CD14-positive monocyte (primary cell): ENCODE measurements at regions of chr16 and their contacts with region 1.

Region 1: DNA sequence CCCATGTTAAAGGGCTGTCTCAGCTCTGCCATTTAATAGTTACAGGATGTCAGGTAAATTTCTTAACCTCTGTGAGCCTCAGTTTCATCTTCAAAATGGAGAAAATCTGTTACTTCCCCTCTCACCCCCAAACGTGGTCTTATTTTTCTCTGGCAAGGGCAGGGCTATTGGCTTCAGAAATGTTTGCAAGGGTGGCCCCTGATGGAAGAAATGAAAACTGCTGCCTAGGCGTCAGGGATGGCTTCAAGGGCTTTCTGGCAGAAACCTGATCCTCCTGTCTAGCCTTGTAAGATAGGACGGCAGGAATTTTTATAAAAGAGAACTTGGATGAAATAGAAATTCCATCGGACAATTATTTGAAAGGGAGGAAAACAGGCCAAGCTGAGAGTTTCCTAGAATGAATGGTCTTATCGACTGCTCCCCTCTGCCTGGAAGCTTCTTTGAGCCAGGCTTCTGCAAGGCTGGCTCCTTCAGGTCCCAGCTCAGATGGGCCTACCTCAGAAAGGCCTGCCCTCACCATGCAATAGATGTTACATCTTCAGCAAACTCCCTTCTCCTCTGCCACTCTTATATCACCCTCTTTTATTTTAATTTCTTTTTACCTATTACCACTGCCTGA is 43.0 kb upstream of the TANGO6 start:
- DNase-seq: peak in 2 of 3 donors; percentile 16 to 41
- H3K4me3 ChIP-seq: no peak overlapping the region
- H3K4me3 Mint-ChIP-seq: no peak overlapping the region
- H3K27ac ChIP-seq: no peak overlapping the region
- H3K27ac Mint-ChIP-seq: no peak overlapping the region
- H3K4me1 ChIP-seq: no peaks in the 10 kb centered on the region
- H3K4me1 Mint-ChIP-seq: peaks cover 3% of the 10 kb centered on the region
- H3K27me3 ChIP-seq: no peaks in the 10 kb centered on the region
- H3K27me3 Mint-ChIP-seq: peaks cover 2 to 5% (median 3%) of the 10 kb centered on the region in 3 donors
- CTCF ChIP-seq: peak; percentile 68

Region 2: GRCh38 chr16:68704232-68704867 is 96.0 kb before region 1 on chr16:
- intact Hi-C with region 1: loop called in 1 of 2 experiments (anchors 10 kb)
- DNase-seq: peak; percentile 34 to 74 (median 39)
- H3K4me3 ChIP-seq: no peak overlapping the region
- H3K4me3 Mint-ChIP-seq: peak overlapping the region in 1 of 2 donors; percentile 46
- H3K27ac ChIP-seq: no peak overlapping the region
- H3K27ac Mint-ChIP-seq: no peak overlapping the region
- H3K4me1 ChIP-seq: peaks cover 23 to 27% of the 10 kb centered on the region in 2 donors
- H3K4me1 Mint-ChIP-seq: peaks cover 16% of the 10 kb centered on the region
- H3K27me3 ChIP-seq: no peaks in the 10 kb centered on the region
- H3K27me3 Mint-ChIP-seq: peaks cover 3 to 10% (median 8%) of the 10 kb centered on the region in 3 donors
- CTCF ChIP-seq: peak; percentile 77

Region 3: GRCh38 chr16:68786685-68787418 is 13.5 kb before region 1 on chr16:
- intact Hi-C with region 1: no loop called
- DNase-seq: no peak
- H3K4me3 ChIP-seq: no peak overlapping the region
- H3K4me3 Mint-ChIP-seq: no peak overlapping the region
- H3K27ac ChIP-seq: no peak overlapping the region
- H3K27ac Mint-ChIP-seq: no peak overlapping the region
- H3K4me1 ChIP-seq: peaks cover 36% of the 10 kb centered on the region in 2 donors
- H3K4me1 Mint-ChIP-seq: peaks cover 35% of the 10 kb centered on the region
- H3K27me3 ChIP-seq: no peaks in the 10 kb centered on the region
- H3K27me3 Mint-ChIP-seq: peaks cover 1 to 6% (median 3%) of the 10 kb centered on the region in 3 donors
- CTCF ChIP-seq: no peak